HAP-1 (cell line): ENCODE measurements at regions of chr10 and their contacts with region 1.

Region 1: DNA sequence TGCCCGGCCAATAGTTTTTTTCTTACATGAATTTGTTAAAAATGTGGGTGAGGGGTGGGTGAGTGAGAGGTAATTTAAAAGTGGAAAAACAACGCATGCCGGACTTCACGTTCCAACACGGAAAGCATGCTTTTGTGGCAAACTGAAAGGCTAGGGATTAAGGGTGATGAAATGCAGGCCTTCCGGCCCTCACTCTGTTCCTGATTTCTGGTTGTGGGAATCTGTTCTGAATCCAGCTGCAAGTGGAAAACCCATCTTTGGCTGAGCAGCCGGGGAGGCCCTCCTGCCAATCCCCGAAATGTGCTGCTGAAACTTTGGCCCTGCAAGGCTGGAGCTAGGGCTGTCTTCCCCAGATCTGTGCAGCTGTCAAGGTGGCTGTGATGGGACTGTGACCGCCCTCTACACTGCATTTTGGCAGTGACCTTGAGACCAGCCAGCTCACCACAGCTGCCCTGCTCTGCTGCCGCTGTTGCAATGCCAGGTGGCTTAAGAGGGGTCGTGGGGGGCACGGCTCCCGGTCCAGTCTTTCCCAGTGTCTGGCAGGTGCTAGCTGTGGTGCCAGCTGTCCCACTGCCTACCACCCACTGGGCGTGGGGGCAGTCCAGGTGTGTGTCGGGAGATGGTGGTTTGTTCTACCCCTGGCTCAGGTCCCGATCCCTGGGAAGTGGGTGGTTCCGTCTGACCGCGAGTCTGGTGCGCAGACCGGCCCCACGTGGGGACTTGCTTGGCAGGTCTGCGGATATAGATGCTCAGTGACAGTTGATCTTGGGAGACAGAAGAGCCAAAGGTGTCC is 39.0 kb downstream of the TET1 start:
- DNase-seq: peak; percentile 70 to 86
- H3K4me3 ChIP-seq: peak overlapping the region; percentile 22
- H3K4me1 ChIP-seq: peaks cover 45% of the 10 kb centered on the region
- H3K27me3 ChIP-seq: no peaks in the 10 kb centered on the region

Region 2: DNA sequence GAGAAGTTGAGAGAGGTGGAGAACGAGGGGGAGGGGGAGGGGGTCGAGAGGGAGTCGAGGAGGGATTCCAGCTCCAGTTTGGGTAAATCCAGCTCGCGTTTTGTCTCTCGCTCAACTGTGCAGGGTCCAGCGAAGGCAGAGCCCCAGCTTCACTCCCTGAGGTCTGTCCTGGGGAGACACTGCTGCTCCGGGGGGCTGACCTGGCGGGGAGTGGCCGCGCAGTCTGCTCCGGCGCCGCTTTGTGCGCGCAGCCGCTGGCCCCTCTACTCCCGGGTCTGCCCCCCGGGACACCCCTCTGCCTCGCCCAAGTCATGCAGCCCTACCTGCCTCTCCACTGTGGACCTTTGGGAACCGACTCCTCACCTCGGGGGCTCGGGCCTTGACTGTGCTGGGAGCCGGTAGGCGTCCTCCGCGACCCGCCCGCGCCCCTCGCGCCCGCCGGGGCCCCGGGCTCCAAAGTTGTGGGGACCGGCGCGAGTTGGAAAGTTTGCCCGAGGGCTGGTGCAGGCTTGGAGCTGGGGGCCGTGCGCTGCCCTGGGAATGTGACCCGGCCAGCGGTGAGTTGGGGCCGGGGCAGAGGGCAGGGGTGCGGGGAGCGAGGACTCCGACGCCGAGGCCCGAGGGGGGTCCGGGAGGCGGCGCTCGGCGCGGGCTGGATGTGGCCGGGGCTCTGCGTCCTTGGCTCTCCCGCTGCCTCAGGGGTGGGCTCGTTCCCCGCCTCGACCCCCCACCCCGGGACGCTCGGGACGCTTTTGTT is 38.8 kb before region 1 on chr10 and contains the start of gene TET1:
- in situ Hi-C with region 1: loop called (anchors 5 kb)
- DNase-seq: peak; percentile 80 to 94
- H3K4me3 ChIP-seq: peak within 1 kb of the TSS; percentile 98
- H3K4me1 ChIP-seq: peaks cover 16% of the 10 kb centered on the region
- H3K27me3 ChIP-seq: no peaks in the 10 kb centered on the region